Activated B cell treated with CpG ODN at 0.5 μM for 24 hours (primary cell): ENCODE measurements at regions of chr3 and their contacts with region 1.

Region 1: GRCh38 chr3:16511681-16512434 is 1.6 kb downstream of the RFTN1 start:
- DNase-seq: peak; percentile 64
- ATAC-seq: peak; percentile 66
- H3K4me3 Mint-ChIP-seq: peak overlapping the region; percentile 97
- H3K27ac Mint-ChIP-seq: peak overlapping the region; percentile 82
- H3K4me1 Mint-ChIP-seq: peaks cover 86% of the 10 kb centered on the region
- H3K27me3 Mint-ChIP-seq: no peaks in the 10 kb centered on the region
- CTCF ChIP-seq: no peak

Region 2: GRCh38 chr3:16024548-16024947 is 487.3 kb before region 1 on chr3:
- CTCF ChIA-PET with region 1: no interaction called
- POLR2A ChIA-PET with region 1: no interaction called
- intact Hi-C with region 1: no loop called
- DNase-seq: no peak
- ATAC-seq: no peak
- H3K4me3 Mint-ChIP-seq: no peak overlapping the region
- H3K27ac Mint-ChIP-seq: no peak overlapping the region
- H3K4me1 Mint-ChIP-seq: no peaks in the 10 kb centered on the region
- H3K27me3 Mint-ChIP-seq: peaks cover 16% of the 10 kb centered on the region
- CTCF ChIP-seq: no peak

Region 3: DNA sequence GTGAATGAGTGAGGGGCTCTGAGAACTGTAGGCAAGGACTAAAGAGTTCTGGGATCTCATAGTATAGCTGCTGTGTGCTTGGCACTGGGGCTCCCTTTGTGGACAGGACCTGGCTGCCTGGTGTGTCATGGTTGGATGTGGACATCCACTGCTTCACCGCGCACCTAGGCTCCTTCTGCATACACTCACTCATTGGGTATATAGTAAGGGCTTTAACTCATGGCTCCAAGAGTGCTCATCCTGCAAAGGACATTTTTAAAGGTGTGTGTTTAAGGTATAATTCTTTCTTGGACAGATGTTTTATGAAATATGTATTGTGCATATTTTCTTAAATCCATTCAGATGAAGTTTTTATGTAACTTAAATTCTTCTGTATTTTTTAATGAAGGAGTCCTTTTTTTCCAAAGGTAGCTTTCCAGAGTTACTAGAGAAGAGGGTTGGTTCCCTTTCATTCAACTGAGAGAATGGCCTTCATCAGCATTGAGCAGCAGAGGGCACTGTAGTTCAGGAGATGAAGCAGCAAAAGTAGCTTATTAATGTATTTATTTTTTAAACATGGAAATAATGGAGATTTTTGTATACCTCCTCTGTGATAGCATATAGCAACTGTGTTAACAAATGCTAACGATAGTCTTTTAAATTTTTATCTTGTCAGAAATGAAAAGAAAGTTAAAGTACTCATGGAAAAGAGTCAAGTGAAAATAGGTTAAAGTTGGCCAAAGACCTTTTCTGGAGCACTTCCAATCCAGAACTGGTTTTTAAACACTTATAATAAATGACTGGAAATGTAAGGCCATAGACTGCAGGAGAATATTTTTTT is 221.6 kb before region 1 on chr3:
- CTCF ChIA-PET with region 1: interaction called, 10 read pairs
- POLR2A ChIA-PET with region 1: interaction called, 6 read pairs
- intact Hi-C with region 1: loop called (anchors 2 kb)
- DNase-seq: no peak
- ATAC-seq: peak; percentile 49
- H3K4me3 Mint-ChIP-seq: no peak overlapping the region
- H3K27ac Mint-ChIP-seq: no peak overlapping the region
- H3K4me1 Mint-ChIP-seq: peaks cover 36% of the 10 kb centered on the region
- H3K27me3 Mint-ChIP-seq: no peaks in the 10 kb centered on the region
- CTCF ChIP-seq: peak; percentile 51

Region 4: GRCh38 chr3:16415911-16416476 is 95.9 kb before region 1 on chr3:
- CTCF ChIA-PET with region 1: no interaction called
- POLR2A ChIA-PET with region 1: interaction called, 12 read pairs
- intact Hi-C with region 1: no loop called
- DNase-seq: no peak
- ATAC-seq: no peak
- H3K4me3 Mint-ChIP-seq: no peak overlapping the region
- H3K27ac Mint-ChIP-seq: no peak overlapping the region
- H3K4me1 Mint-ChIP-seq: peaks cover 79% of the 10 kb centered on the region
- H3K27me3 Mint-ChIP-seq: no peaks in the 10 kb centered on the region
- CTCF ChIP-seq: no peak

Region 5: GRCh38 chr3:16482770-16483531 is 28.9 kb before region 1 on chr3:
- CTCF ChIA-PET with region 1: interaction called, 6 read pairs
- POLR2A ChIA-PET with region 1: interaction called, 58 read pairs
- intact Hi-C with region 1: loop called (anchors 1 kb)
- DNase-seq: peak; percentile 45
- ATAC-seq: peak; percentile 94
- H3K4me3 Mint-ChIP-seq: peak overlapping the region; percentile 68
- H3K27ac Mint-ChIP-seq: peak overlapping the region; percentile 78
- H3K4me1 Mint-ChIP-seq: peaks cover 86% of the 10 kb centered on the region
- H3K27me3 Mint-ChIP-seq: no peaks in the 10 kb centered on the region
- CTCF ChIP-seq: no peak

Region 6: GRCh38 chr3:16550676-16551341 is 39.0 kb after region 1 on chr3:
- CTCF ChIA-PET with region 1: interaction called, 5 read pairs
- POLR2A ChIA-PET with region 1: interaction called, 12 read pairs
- intact Hi-C with region 1: loop called (anchors 1 kb)
- DNase-seq: peak; percentile 32
- ATAC-seq: peak; percentile 98
- H3K4me3 Mint-ChIP-seq: no peak overlapping the region
- H3K27ac Mint-ChIP-seq: peak overlapping the region; percentile 43
- H3K4me1 Mint-ChIP-seq: peaks cover 7% of the 10 kb centered on the region
- H3K27me3 Mint-ChIP-seq: peaks cover 6% of the 10 kb centered on the region
- CTCF ChIP-seq: no peak

Region 7: GRCh38 chr3:17398959-17399551 is 887.2 kb after region 1 on chr3:
- CTCF ChIA-PET with region 1: no interaction called
- POLR2A ChIA-PET with region 1: no interaction called
- intact Hi-C with region 1: loop called (anchors 5 kb)
- DNase-seq: no peak
- ATAC-seq: peak; percentile 72
- H3K4me3 Mint-ChIP-seq: no peak overlapping the region
- H3K27ac Mint-ChIP-seq: no peak overlapping the region
- H3K4me1 Mint-ChIP-seq: peaks cover 37% of the 10 kb centered on the region
- H3K27me3 Mint-ChIP-seq: no peaks in the 10 kb centered on the region
- CTCF ChIP-seq: no peak